H1 (cell line): ENCODE measurements at regions of chr11 and their contacts with region 1.

Region 1: GRCh38 chr11:67239783-67240575 is 26.3 kb upstream of the GRK2 start:
- DNase-seq: peak; percentile 91 to 98
- H3K4me3 ChIP-seq: peak overlapping the region; percentile 90 to 99 (median 94)
- H3K27ac ChIP-seq: peak overlapping the region; percentile 83
- H3K4me1 ChIP-seq: peaks cover 6 to 8% (median 7%) of the 10 kb centered on the region in 4 experiments; a peak in 5 of 7 replicates
- H3K27me3 ChIP-seq: no peaks in the 10 kb centered on the region
- CTCF ChIP-seq: no peak
- EP300 ChIP-seq: peak in 1 of 2 experiments; percentile 23; a peak in 1 of 3 replicates
- POLR2A ChIP-seq: peak; percentile 95 to 99
- RAD21 ChIP-seq: peak in 1 of 2 experiments; percentile 12; a peak in 1 of 4 replicates

Region 2: DNA sequence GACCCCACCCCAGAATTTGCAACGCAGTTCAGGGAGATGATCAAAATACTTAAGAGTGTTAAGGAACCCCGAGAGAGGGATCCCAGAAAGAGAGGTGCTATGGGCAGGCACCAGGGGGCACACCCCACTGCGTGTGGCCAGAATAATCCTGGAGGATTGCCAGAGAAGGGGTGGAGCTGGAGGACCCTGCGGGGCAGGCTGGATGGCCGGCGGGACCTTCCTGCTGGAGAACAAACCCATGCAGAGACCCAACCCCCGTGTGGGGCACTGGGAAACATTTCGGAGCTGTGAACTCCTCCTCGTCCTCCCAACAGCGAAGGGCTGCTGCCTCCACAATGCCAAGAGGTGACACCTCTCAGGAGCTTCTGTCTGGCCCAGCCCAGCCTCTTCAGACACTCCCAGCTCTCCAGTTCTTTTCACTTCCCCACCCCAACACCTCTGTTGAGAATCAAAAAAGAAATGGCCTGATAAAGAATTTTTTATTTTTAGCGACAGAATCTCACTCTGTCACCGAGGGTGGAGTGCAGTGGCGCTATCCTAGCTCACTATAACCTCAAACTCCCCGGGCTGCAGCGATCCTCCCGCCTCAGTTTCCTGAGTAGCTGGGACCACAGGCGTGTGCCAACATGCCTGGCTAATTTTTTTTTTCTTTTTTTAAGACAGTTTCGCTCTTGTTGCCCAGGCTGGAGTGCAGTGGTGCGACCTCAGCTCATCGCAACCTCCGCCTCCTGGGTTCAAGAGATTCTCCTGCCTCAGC is 157.8 kb before region 1 on chr11:
- CTCF ChIA-PET with region 1: interaction called, 23 read pairs
- POLR2A ChIA-PET with region 1: interaction called, 19 read pairs
- DNase-seq: peak in 1 of 2 experiments; percentile 68
- H3K4me3 ChIP-seq: peak overlapping the region in 1 of 4 experiments; percentile 45; a peak in 3 of 8 replicates
- H3K27ac ChIP-seq: no peak overlapping the region
- H3K4me1 ChIP-seq: peaks cover 0 to 11% (median 4%) of the 10 kb centered on the region in 4 experiments; a peak in 4 of 7 replicates
- H3K27me3 ChIP-seq: no peaks in the 10 kb centered on the region
- CTCF ChIP-seq: peak; percentile 14 to 19 (median 17)
- EP300 ChIP-seq: no peak
- POLR2A ChIP-seq: no peak
- RAD21 ChIP-seq: peak in 1 of 2 experiments; percentile 41; a peak in 1 of 4 replicates

Region 3: DNA sequence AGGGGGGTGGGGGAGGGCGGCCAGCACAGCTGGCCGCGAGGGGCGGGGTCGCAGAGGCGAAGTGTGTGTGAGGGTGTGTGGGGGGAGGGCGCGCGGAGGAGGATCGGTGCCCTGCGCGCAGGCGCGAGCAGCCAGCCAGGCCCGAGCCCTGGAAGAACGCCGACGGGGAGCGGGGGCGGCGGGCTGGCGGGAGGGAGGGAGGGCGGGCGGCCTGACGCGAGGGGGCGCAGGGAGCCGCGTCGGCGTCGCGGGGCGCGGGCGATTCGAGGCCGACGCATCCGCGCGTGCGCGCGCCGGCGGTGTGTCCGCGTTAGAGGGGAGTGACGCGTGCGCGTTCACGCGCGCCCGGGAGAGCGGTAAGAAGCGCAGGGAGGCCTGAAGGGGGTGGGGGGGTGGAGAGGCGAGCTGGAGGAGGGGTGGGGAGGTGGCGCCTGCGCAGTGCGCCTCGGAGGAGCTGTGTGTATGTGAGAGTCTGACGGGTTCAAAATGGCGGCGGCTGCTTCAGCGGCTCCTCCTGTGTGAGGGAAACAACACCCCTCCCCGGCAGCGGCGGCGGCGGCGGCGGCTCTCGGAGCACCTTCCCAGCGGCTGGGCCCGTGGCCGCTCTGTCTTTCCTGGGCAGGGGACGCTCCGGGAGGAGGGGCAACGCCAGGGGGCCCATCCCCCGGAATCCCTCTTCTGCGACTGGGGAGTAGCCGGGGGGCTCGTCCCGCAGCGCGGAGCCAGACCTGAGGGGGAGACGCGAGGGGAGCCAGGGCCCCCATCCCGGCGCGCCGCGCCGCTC is 121.0 kb before region 1 on chr11 and contains the start of gene KDM2A:
- CTCF ChIA-PET with region 1: no interaction called
- POLR2A ChIA-PET with region 1: interaction called, 11 read pairs
- DNase-seq: peak; percentile 92 to 97
- H3K4me3 ChIP-seq: peak within 1 kb of the TSS; percentile 80 to 97 (median 92)
- H3K27ac ChIP-seq: peak within 1 kb of the TSS; percentile 94
- H3K4me1 ChIP-seq: peaks cover 0 to 5% (median 3%) of the 10 kb centered on the region in 4 experiments; a peak in 4 of 7 replicates
- H3K27me3 ChIP-seq: no peaks in the 10 kb centered on the region
- CTCF ChIP-seq: peak in 1 of 3 experiments; percentile 22; a peak in 1 of 4 replicates
- EP300 ChIP-seq: 0 out of 3 replicates have a peak, but pooled peaks of 1 of the 2 experiments have one; percentile 43
- POLR2A ChIP-seq: peak; percentile 30 to 52; a peak in 2 of 3 replicates
- RAD21 ChIP-seq: no peak; a peak in 1 of 4 replicates
- total RNA-seq, gene KDM2A: 56.6 and 66.2 TPM in 2 replicates

Region 4: GRCh38 chr11:67252831-67253239 is 12.9 kb after region 1 on chr11:
- CTCF ChIA-PET with region 1: interaction called, 8 read pairs
- POLR2A ChIA-PET with region 1: interaction called, 23 read pairs
- DNase-seq: no peak
- H3K4me3 ChIP-seq: no peak overlapping the region
- H3K27ac ChIP-seq: no peak overlapping the region
- H3K4me1 ChIP-seq: no peaks in the 10 kb centered on the region
- H3K27me3 ChIP-seq: no peaks in the 10 kb centered on the region
- CTCF ChIP-seq: peak; percentile 19 to 67 (median 34); a peak in 3 of 4 replicates
- EP300 ChIP-seq: no peak
- POLR2A ChIP-seq: no peak
- RAD21 ChIP-seq: peak; percentile 47 to 54

Region 5: DNA sequence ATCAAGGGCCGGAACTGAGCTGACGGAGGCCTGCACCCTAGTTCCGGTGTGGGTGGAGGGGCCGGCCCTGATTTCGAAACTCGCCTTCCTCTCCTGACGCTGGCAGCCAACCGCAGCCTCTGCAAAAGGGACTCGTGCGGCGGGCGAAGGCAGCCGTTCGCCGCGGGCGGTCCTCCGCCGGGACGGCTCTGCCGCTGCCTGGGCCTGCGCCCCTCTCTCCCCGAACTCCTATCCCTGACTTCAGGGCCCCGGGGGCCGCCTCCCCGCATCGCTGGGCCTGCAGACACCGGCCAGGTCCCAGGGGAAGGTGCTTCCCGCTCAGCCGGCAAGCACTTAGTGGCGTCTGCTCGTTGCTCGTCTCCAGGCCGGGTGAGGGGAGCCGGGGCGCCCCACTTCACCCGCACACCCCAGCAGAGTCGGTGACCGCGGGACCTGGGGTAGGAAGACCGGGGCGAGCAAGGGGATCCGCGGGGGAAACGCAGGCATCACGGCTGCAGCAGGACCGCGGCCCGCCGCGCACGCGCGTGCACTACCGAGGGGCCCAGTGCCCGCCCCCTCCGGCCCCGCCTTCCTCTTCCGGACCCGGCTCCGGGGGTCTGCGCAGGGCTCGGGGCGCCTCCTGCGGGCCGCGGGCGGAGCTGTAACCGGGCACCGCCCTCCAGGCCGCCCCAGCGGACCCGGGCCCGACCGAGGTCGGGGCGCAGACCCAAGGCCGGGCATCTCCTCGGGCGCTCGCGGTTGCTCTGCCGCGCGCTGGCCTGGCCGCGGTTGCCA is 48.7 kb after region 1 on chr11:
- CTCF ChIA-PET with region 1: no interaction called
- POLR2A ChIA-PET with region 1: interaction called, 12 read pairs
- DNase-seq: peak in 1 of 2 experiments; percentile 91
- H3K4me3 ChIP-seq: peak overlapping the region; percentile 58 to 85 (median 72)
- H3K27ac ChIP-seq: peak overlapping the region; percentile 86
- H3K4me1 ChIP-seq: peaks cover 0 to 18% (median 11%) of the 10 kb centered on the region in 4 experiments; a peak in 6 of 7 replicates
- H3K27me3 ChIP-seq: no peaks in the 10 kb centered on the region
- CTCF ChIP-seq: peak in 2 of 3 experiments; percentile 52 to 79; a peak in 3 of 4 replicates
- EP300 ChIP-seq: no peak
- POLR2A ChIP-seq: peak in 1 of 2 experiments; percentile 61; a peak in 1 of 3 replicates
- RAD21 ChIP-seq: peak; percentile 48 to 80; a peak in 3 of 4 replicates

Region 6: GRCh38 chr11:67303132-67303834 is 63.3 kb after region 1 on chr11 and contains the start of gene SSH3:
- CTCF ChIA-PET with region 1: no interaction called
- POLR2A ChIA-PET with region 1: interaction called, 10 read pairs
- DNase-seq: peak in 1 of 2 experiments; percentile 46
- H3K4me3 ChIP-seq: peak within 1 kb of the TSS; percentile 67 to 94 (median 74)
- H3K27ac ChIP-seq: no peak within 1 kb of the TSS
- H3K4me1 ChIP-seq: peaks cover 0 to 20% (median 16%) of the 10 kb centered on the region in 4 experiments; a peak in 5 of 7 replicates
- H3K27me3 ChIP-seq: peaks cover 0 to 11% (median 7%) of the 10 kb centered on the region in 4 experiments; a peak in 5 of 7 replicates
- CTCF ChIP-seq: no peak
- EP300 ChIP-seq: no peak
- POLR2A ChIP-seq: no peak; a peak in 1 of 3 replicates
- RAD21 ChIP-seq: no peak
- total RNA-seq, gene SSH3: 19.8 and 23.6 TPM in 2 replicates

Region 7: GRCh38 chr11:67323526-67323925 is 83.5 kb after region 1 on chr11:
- CTCF ChIA-PET with region 1: no interaction called
- POLR2A ChIA-PET with region 1: no interaction called
- DNase-seq: no peak
- H3K4me3 ChIP-seq: no peak overlapping the region
- H3K27ac ChIP-seq: no peak overlapping the region
- H3K4me1 ChIP-seq: no peaks in the 10 kb centered on the region
- H3K27me3 ChIP-seq: peaks cover under 1 to 10% (median 6%) of the 10 kb centered on the region in 4 experiments; a peak in 6 of 7 replicates
- CTCF ChIP-seq: no peak
- EP300 ChIP-seq: no peak
- POLR2A ChIP-seq: no peak
- RAD21 ChIP-seq: no peak